ENCODE measurements at regions of chr1 and their contacts with region 1.

Region 1: GRCh38 chr1:3386205-3387002 is 68.1 kb upstream of the ARHGEF16 start:
- DNase-seq: no peak
- H3K4me3 ChIP-seq: no peak overlapping the region
- H3K27ac ChIP-seq: no peak overlapping the region
- H3K4me1 ChIP-seq: no peaks in the 10 kb centered on the region
- H3K27me3 ChIP-seq: peaks cover 4% of the 10 kb centered on the region
- CTCF ChIP-seq: no peak

Region 2: GRCh38 chr1:2817784-2818564 is 568.4 kb before region 1 on chr1:
- CTCF ChIA-PET with region 1: no interaction called
- dilution Hi-C with region 1: loop called (anchors 5 kb)
- in situ Hi-C with region 1: no loop called
- intact Hi-C with region 1: no loop called
- DNase-seq: no peak
- H3K4me3 ChIP-seq: no peak overlapping the region
- H3K27ac ChIP-seq: no peak overlapping the region
- H3K4me1 ChIP-seq: no peaks in the 10 kb centered on the region
- H3K27me3 ChIP-seq: no peaks in the 10 kb centered on the region
- CTCF ChIP-seq: no peak

Region 3: DNA sequence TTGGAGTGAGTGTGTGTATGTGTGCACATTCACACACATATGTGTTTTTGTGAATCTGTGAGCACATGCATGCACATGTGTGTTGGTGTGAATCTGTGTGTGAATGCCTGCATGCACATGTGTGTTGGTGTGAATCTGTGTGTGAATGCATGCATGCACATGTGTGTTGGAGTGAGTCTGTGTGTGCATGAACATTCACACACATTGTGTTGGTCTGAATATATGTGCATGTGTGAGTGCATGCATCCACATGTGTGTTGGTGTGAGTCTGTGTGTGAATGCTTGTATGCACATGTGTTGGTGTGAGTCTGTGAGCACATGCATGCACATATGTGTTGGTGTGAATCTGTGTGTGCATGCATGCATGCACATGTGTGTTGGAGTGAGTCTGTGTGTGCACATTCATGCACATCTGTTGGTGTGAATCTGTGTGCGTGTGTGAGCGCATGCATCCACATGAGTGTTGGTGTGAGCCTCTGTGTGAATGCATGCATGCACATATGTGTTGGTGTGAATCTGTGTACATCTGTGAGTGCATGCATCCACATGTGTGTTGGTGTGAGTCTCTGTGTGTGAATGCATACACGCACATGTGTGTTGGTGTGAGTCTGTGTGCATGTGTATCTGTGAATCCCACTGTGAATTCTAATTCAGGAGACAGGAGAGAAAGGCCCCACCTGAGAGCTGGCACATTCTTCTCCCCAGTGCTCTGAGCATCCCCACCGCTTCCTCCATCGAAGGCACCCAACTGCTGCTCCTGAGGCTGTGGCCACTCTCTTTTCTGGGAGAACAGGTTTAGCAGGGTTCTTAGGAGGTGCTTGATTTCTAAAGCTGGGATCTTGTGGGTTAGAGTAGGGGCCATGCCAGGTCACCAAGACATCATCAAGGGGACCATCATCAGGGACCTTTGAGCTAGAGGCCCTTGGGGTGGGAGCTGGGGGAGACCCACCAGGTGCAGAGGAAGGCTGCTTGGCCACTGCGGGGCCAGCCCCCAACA is 49.5 kb before region 1 on chr1:
- CTCF ChIA-PET with region 1: no interaction called
- dilution Hi-C with region 1: loop called (anchors 5 kb)
- in situ Hi-C with region 1: no loop called
- intact Hi-C with region 1: no loop called
- DNase-seq: no peak
- H3K4me3 ChIP-seq: no peak overlapping the region
- H3K27ac ChIP-seq: no peak overlapping the region
- H3K4me1 ChIP-seq: no peaks in the 10 kb centered on the region
- H3K27me3 ChIP-seq: no peaks in the 10 kb centered on the region
- CTCF ChIP-seq: no peak

Region 4: DNA sequence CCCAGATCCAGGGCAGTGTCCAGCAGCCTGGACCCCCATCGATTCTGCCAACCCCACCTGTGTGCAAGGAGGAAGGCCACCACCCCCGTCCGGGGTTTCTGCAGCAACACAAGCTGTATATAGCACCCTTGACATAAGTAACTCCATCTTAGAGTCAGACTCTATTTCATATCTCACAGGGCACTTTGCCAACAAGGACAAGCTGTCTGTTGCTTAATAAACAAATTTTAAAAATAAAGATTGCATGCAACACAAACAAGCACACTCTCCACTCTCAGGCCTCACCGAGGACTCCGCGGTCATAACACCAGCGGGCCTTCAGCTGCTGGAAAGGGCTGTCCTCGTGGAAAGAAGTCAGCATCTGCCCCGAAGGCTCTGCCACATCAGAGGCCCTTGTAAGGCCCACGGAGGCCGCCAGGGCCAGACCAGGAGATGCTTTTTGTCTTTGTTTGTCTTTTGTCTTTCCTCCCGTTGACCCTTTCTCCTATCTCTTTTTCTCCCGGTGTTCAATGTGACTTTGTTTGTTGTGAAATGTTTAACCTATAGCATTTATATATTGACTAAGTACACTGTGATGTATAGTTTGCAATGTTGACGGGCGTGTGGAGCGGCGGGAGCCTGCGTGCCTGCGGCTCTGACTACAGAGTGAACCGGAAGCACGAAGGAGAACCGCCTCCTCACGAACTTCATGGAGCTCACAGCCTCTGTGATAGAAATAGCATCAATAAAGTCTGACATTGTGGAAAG is 200.7 kb after region 1 on chr1:
- CTCF ChIA-PET with region 1: no interaction called
- dilution Hi-C with region 1: no loop called
- in situ Hi-C with region 1: no loop called
- intact Hi-C with region 1: no loop called
- DNase-seq: no peak
- H3K4me3 ChIP-seq: no peak overlapping the region
- H3K27ac ChIP-seq: no peak overlapping the region
- H3K4me1 ChIP-seq: no peaks in the 10 kb centered on the region
- H3K27me3 ChIP-seq: no peaks in the 10 kb centered on the region
- CTCF ChIP-seq: no peak

Measured in mammary epithelial cell (primary cell).